CD8-positive, alpha-beta T cell (primary cell): ENCODE measurements at regions of chr15 and their contacts with region 1.

Region 1: DNA sequence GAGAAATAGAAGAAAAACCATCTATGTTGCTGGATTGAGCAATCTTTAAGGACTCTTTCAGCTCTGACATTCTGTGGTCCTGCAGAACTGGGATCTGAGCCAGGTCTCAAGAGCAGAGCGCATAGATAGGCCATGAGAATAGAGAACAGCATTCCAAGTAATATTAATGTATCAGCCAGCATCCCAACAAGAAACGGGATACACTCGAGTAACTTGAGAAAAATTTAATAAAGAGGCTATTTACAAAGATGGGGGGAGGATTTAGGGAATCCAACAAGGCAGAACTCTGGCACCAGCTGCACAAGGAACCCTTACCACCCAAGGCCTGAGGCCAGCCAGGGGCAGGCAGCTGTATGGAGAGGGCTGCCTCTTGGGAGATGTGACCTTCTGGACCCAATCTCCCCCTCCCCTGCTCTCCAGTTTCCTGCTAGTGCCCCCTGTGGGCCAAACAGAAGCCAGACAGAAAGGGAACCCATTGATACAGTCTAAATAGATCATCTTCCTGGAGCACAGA is 8.2 kb downstream of the TMOD2 start:
- DNase-seq: peak in 1 of 9 experiments; percentile 36
- ATAC-seq: no peak
- H3K4me3 ChIP-seq: no peak overlapping the region
- H3K4me3 Mint-ChIP-seq: no peak overlapping the region
- H3K27ac ChIP-seq: no peak overlapping the region
- H3K27ac Mint-ChIP-seq: no peak overlapping the region
- H3K4me1 ChIP-seq: no peaks in the 10 kb centered on the region
- H3K4me1 Mint-ChIP-seq: peaks cover 12% of the 10 kb centered on the region
- H3K27me3 ChIP-seq: no peaks in the 10 kb centered on the region
- H3K27me3 Mint-ChIP-seq: no peaks in the 10 kb centered on the region
- CTCF ChIP-seq: no peak

Region 2: DNA sequence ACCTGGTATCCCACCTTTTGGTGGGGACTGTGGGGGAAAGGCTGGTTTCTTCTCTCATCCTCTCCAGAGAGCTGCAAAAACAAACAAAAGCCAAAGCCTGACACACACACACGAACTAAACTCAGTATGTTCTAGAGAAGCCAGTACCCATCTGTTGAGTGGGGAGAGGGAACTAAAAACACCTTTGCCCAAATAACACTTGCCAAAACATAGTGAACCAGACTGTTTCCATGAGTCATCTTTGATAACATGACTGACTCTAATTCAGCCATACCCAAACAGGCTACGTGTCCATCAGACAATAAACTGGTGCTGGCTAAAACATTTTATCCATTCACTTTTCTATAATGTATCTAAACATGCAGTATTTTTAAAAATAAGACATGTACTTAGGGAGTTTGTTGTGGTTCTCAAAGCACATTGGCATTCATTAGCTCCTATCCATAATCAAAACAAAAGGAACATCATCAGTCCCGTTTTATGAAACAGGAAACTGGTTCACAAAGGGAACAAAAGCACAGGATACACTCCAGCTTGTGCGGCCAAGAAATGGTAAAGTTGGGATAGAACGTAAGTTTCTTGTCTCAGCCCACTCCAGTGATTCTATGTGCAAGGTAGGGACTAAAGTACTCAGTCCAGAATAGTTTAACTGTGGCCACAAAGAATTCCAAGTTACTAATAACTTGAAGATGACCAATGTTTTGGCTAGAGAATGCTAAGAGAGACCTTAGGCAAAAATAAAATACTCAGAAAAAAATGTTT is 38.2 kb before region 1 on chr15:
- CTCF ChIA-PET with region 1: no interaction called
- POLR2A ChIA-PET with region 1: interaction called, 3 read pairs
- intact Hi-C with region 1: loop called in 1 of 2 experiments (anchors 5 kb)
- DNase-seq: no peak
- ATAC-seq: no peak
- H3K4me3 ChIP-seq: no peak overlapping the region
- H3K4me3 Mint-ChIP-seq: no peak overlapping the region
- H3K27ac ChIP-seq: no peak overlapping the region
- H3K27ac Mint-ChIP-seq: no peak overlapping the region
- H3K4me1 ChIP-seq: peaks cover 22% of the 10 kb centered on the region
- H3K4me1 Mint-ChIP-seq: peaks cover 33% of the 10 kb centered on the region
- H3K27me3 ChIP-seq: no peaks in the 10 kb centered on the region
- H3K27me3 Mint-ChIP-seq: no peaks in the 10 kb centered on the region
- CTCF ChIP-seq: no peak